Mammary epithelial cell (primary cell): ENCODE measurements at regions of chr14 and their contacts with region 1.

Region 1: GRCh38 chr14:58239244-58240195 is 5.1 kb upstream of the PSMA3 start:
- DNase-seq: peak; percentile 46
- H3K4me3 ChIP-seq: peak overlapping the region; percentile 50 to 100 (median 91)
- H3K27ac ChIP-seq: peak overlapping the region; percentile 42
- H3K4me1 ChIP-seq: peaks cover 17% of the 10 kb centered on the region
- H3K27me3 ChIP-seq: no peaks in the 10 kb centered on the region
- CTCF ChIP-seq: no peak

Region 2: DNA sequence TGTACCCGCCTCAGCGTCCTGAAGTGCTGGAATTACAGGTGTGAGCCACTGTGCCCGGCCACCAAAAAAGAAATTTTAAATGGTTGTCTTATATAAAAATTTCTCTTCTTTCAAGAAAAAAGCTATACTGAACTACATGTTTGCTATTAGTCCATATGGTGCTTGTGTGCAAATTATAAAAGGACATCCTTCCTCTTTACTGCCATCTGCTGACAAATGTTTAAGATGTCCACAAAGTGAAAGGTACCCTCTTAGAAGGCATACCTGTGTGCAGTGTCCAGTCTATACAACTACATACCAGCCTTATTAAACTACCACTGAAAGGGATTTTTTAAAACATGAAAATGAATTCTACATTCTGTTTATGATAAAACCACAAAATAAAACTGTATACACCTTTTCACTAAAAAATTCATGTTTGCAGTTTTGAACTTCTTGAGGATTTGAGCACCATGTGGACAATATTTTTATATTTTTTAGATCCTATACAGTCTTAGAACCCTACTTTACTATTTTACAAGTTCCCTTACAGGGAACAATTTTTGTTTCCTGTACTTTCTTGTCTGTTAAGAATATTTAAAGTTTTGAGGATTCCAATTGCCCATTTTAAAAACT is 123.4 kb after region 1 on chr14:
- CTCF ChIA-PET with region 1: no interaction called
- dilution Hi-C with region 1: no loop called
- in situ Hi-C with region 1: no loop called
- intact Hi-C with region 1: loop called (anchors 2 kb)
- DNase-seq: peak; percentile 29
- H3K4me3 ChIP-seq: no peak overlapping the region
- H3K27ac ChIP-seq: no peak overlapping the region
- H3K4me1 ChIP-seq: no peaks in the 10 kb centered on the region
- H3K27me3 ChIP-seq: no peaks in the 10 kb centered on the region
- CTCF ChIP-seq: peak; percentile 31 to 43